ENCODE measurements at regions of chr2 and their contacts with region 1.

Region 1: GRCh38 chr2:207640661-207641060 is 15.5 kb upstream of the METTL21A start:
- DNase-seq: no peak
- ATAC-seq: no peak

Region 2: DNA sequence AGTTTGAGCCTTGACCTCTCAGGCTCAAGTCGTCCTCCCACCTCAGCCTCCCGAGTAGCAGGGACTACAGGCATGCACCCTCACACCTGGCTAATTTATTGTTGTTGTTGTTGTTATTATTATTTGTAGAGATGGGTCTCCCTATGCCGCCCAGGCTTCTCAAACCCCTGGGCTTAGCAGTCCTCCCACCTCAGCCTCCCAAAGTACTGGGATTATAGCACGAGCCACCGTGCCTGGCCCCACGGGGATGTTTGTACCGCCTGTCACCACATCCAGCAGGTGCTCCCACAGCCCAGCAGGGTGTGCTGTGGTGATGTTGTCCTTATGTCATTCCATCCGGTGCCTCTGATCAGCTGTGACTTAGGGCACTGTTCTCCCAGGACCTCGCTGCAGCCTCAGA is 1737.0 kb before region 1 on chr2:
- intact Hi-C with region 1: no loop called
- DNase-seq: peak; percentile 37
- ATAC-seq: peak; percentile 52

Region 3: GRCh38 chr2:206379886-206380285 is 1260.8 kb before region 1 on chr2:
- intact Hi-C with region 1: loop called (anchors 10 kb)
- DNase-seq: no peak
- ATAC-seq: no peak

Region 4: DNA sequence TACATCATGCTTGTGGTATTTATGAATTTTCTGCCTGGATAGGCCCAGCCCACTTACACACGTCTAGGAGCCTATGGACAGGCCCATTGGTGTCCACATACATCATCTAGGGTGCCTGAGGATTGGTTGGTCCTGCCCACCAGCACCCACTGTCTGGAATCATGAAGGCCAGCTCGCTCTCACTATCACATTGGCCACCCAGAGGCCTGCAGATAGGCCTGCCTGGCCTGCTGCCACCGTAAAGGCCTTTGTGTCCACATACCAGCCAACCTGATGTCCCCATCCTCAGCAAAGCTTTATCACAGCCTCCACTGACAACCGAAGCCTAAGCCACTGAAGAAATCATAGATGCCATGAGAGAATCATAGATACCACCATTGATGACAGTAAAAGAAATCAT is 55.7 kb before region 1 on chr2:
- intact Hi-C with region 1: no loop called
- DNase-seq: peak; percentile 57
- ATAC-seq: peak; percentile 68

Measured in left ventricle myocardium superior (tissue), 1 donor.